ENCODE measurements at regions of chr3 and their contacts with region 1.

Region 1: GRCh38 chr3:24763415-24763814 is 268.8 kb upstream of the THRB start:
- DNase-seq: no peak
- H3K4me3 ChIP-seq: no peak overlapping the region
- H3K27ac ChIP-seq: no peak overlapping the region
- H3K4me1 ChIP-seq: no peaks in the 10 kb centered on the region
- H3K27me3 ChIP-seq: no peaks in the 10 kb centered on the region
- CTCF ChIP-seq: no peak
- EP300 ChIP-seq: no peak
- POLR2A ChIP-seq: no peak

Region 2: GRCh38 chr3:23959135-23959900 is 804.1 kb before region 1 on chr3:
- in situ Hi-C with region 1: no loop called
- intact Hi-C with region 1: no loop called
- DNase-seq: no peak
- H3K4me3 ChIP-seq: no peak overlapping the region
- H3K27ac ChIP-seq: peak overlapping the region; percentile 47 to 59 (median 54)
- H3K4me1 ChIP-seq: peaks cover 6 to 31% (median 16%) of the 10 kb centered on the region in 4 donors
- H3K27me3 ChIP-seq: no peaks in the 10 kb centered on the region
- CTCF ChIP-seq: no peak
- EP300 ChIP-seq: peak; percentile 27
- POLR2A ChIP-seq: no peak

Region 3: DNA sequence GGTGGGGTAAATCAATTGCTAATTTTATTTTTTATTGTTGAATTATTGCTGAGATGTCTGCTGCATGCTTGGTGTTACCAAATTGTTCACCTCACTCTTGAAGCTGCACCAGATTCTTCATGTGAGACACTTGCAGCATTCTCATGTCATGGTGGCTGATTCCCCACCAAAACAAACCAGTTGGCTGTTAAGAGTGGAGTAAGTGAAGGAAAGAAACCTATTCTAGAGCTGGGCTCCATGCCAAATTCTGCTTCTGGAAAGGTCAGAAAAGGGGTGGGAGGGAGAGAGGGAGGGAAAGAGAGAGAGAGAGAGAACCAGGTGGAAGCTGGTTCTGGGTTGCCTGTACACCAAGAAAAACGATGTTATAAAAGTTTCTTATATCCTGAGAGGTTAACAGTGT is 48.7 kb after region 1 on chr3:
- in situ Hi-C with region 1: no loop called
- intact Hi-C with region 1: loop called (anchors 2 kb)
- DNase-seq: no peak
- H3K4me3 ChIP-seq: no peak overlapping the region
- H3K27ac ChIP-seq: no peak overlapping the region
- H3K4me1 ChIP-seq: no peaks in the 10 kb centered on the region
- H3K27me3 ChIP-seq: no peaks in the 10 kb centered on the region
- CTCF ChIP-seq: no peak
- EP300 ChIP-seq: no peak
- POLR2A ChIP-seq: no peak